ENCODE measurements at regions of chr3 and their contacts with region 1.

Region 1: GRCh38 chr3:160038862-160039562 is 50.4 kb downstream of the IL12A start:
- DNase-seq: no peak
- H3K4me3 ChIP-seq: peak overlapping the region in 2 of 3 experiments; percentile 23 to 33
- H3K27ac ChIP-seq: no peak overlapping the region
- H3K4me1 ChIP-seq: peaks cover 5% of the 10 kb centered on the region
- H3K27me3 ChIP-seq: peaks cover 21% of the 10 kb centered on the region
- CTCF ChIP-seq: no peak

Region 2: DNA sequence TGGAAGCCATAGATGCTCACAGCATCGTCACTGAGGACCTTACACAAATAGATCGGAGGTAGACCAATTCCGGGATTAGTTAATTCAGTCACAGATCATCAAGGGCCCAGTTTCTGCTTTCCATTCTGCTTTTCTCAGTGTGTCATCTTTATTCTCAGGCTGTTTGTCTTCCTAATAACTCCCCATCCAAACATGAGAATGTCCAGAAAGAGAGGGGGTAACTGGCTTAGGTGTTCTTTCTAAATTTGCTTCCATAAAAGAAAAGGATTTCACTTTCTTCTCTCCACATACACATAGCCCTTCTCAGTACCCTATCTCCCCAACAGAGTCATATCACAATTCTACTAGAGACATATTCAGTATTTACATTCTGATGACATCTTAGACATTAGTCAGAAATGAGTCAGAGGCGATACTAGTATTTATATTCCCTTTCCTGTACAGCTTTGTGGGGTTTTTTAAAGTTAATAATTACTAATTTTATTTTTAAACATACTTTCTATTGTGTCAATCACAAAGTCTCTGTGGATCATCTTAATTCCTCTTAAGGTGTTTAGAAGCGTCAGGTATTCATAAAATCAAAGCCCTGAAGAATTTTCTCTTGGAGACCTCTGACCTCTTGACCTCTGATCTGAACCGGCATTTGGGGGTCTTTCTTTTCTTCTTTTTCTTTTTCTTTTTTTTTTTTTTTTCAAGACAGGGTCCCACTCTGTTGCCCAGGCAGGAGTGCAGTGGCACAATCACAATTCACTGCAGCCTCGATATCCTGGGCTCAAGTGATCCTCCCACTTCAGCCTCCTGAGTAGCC is 74.6 kb before region 1 on chr3:
- CTCF ChIA-PET with region 1: no interaction called
- dilution Hi-C with region 1: loop called (anchors 5 kb)
- in situ Hi-C with region 1: no loop called
- intact Hi-C with region 1: no loop called
- DNase-seq: peak; percentile 74
- H3K4me3 ChIP-seq: no peak overlapping the region
- H3K27ac ChIP-seq: peak overlapping the region; percentile 62
- H3K4me1 ChIP-seq: peaks cover 10% of the 10 kb centered on the region
- H3K27me3 ChIP-seq: no peaks in the 10 kb centered on the region
- CTCF ChIP-seq: no peak

Region 3: DNA sequence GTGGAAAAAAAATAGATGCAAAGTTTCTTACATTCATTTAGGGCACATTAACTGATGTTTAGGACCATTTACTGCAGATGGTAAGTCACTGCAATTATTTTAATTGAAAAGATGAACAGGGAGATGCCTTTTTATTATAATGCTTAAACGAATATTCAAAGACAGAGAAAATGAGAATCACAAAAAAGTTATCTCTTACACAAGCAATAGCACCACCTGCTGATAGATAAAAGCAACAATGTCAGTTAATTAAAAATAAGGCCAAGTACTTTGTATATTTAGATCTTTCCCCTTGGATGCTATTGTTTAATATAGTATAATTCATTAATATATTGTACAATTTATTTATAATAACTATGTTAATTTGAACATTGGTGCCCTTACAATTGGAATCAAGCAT is 304.1 kb after region 1 on chr3:
- CTCF ChIA-PET with region 1: no interaction called
- dilution Hi-C with region 1: no loop called
- in situ Hi-C with region 1: loop called (anchors 5 to 10 kb)
- intact Hi-C with region 1: no loop called
- DNase-seq: peak; percentile 4
- H3K4me3 ChIP-seq: no peak overlapping the region
- H3K27ac ChIP-seq: no peak overlapping the region
- H3K4me1 ChIP-seq: no peaks in the 10 kb centered on the region
- H3K27me3 ChIP-seq: no peaks in the 10 kb centered on the region
- CTCF ChIP-seq: peak; percentile 41 to 51

Region 4: GRCh38 chr3:160486459-160486869 is 447.5 kb after region 1 on chr3:
- CTCF ChIA-PET with region 1: no interaction called
- dilution Hi-C with region 1: no loop called
- in situ Hi-C with region 1: no loop called
- intact Hi-C with region 1: loop called (anchors 10 kb)
- DNase-seq: no peak
- H3K4me3 ChIP-seq: no peak overlapping the region
- H3K27ac ChIP-seq: no peak overlapping the region
- H3K4me1 ChIP-seq: no peaks in the 10 kb centered on the region
- H3K27me3 ChIP-seq: no peaks in the 10 kb centered on the region
- CTCF ChIP-seq: peak; percentile 53 to 58